Mammary epithelial cell (primary cell): ENCODE measurements at regions of chr9 and their contacts with region 1.

Region 1: GRCh38 chr9:114587385-114588202 is at the start of gene ATP6V1G1:
- DNase-seq: peak; percentile 99
- H3K4me3 ChIP-seq: peak within 1 kb of the TSS; percentile 72 to 94 (median 89)
- H3K27ac ChIP-seq: peak within 1 kb of the TSS; percentile 96
- H3K4me1 ChIP-seq: peaks cover 25% of the 10 kb centered on the region
- H3K27me3 ChIP-seq: no peaks in the 10 kb centered on the region
- CTCF ChIP-seq: peak in 1 of 2 donors; percentile 24
- total RNA-seq, gene ATP6V1G1: 99.6 to 130 TPM

Region 2: DNA sequence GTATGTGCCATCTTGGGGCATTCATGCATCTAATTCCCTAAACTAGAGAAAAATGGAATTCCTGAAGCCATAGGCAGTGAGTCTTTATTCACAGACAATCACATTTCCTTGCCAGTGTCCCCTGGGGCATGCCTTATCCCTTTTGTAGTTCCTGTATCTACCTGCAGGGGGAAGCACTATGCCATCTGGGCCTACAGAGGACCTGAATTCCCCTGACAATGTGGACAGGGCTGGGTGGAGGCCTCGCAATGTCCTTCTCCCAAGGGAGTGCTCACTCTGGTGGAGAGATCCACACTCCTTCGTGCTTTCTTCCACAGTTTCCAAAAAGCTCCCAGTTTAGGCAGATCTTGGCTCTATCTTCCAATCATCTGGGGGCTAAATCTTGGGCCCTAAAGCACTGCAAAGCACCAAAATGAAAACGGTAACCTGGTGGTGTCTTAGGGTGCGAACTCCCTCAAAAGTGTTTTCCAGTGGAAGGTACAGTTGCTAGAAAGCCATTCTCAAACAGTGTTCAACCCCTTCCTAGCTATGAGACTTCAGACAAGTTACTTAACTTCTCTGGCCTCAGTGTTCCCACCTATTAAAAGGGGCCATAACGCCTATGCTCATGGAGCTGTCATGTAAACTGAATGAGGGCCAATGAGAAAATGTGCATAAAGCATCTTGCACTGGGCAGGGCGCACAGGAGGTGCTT is 99.8 kb before region 1 on chr9:
- CTCF ChIA-PET with region 1: no interaction called
- dilution Hi-C with region 1: no loop called
- in situ Hi-C with region 1: no loop called
- intact Hi-C with region 1: loop called (anchors 5 kb)
- DNase-seq: peak; percentile 66
- H3K4me3 ChIP-seq: no peak overlapping the region
- H3K27ac ChIP-seq: no peak overlapping the region
- H3K4me1 ChIP-seq: peaks cover 17% of the 10 kb centered on the region
- H3K27me3 ChIP-seq: no peaks in the 10 kb centered on the region
- CTCF ChIP-seq: peak; percentile 89 to 96

Region 3: GRCh38 chr9:114505187-114506081 is 82.2 kb before region 1 on chr9 and contains the start of gene WHRN:
- CTCF ChIA-PET with region 1: interaction called, 19 read pairs
- dilution Hi-C with region 1: no loop called
- in situ Hi-C with region 1: no loop called
- intact Hi-C with region 1: loop called (anchors 1 kb)
- DNase-seq: peak; percentile 88
- H3K4me3 ChIP-seq: peak within 1 kb of the TSS; percentile 64 to 79 (median 67)
- H3K27ac ChIP-seq: peak within 1 kb of the TSS; percentile 81
- H3K4me1 ChIP-seq: peaks cover 32% of the 10 kb centered on the region
- H3K27me3 ChIP-seq: no peaks in the 10 kb centered on the region
- CTCF ChIP-seq: no peak
- total RNA-seq, gene WHRN: 3.2 to 9.7 TPM

Region 4: GRCh38 chr9:114525505-114525904 is 62.1 kb before region 1 on chr9:
- CTCF ChIA-PET with region 1: interaction called, 4 read pairs
- dilution Hi-C with region 1: loop called (anchors 5 kb)
- in situ Hi-C with region 1: no loop called
- intact Hi-C with region 1: no loop called
- DNase-seq: peak; percentile 62
- H3K4me3 ChIP-seq: no peak overlapping the region
- H3K27ac ChIP-seq: no peak overlapping the region
- H3K4me1 ChIP-seq: no peaks in the 10 kb centered on the region
- H3K27me3 ChIP-seq: peaks cover 4% of the 10 kb centered on the region
- CTCF ChIP-seq: no peak

Region 5: GRCh38 chr9:114551883-114552685 is 35.5 kb before region 1 on chr9:
- CTCF ChIA-PET with region 1: interaction called, 4 read pairs
- dilution Hi-C with region 1: no loop called
- in situ Hi-C with region 1: no loop called
- intact Hi-C with region 1: loop called (anchors 1 kb)
- DNase-seq: peak; percentile 99
- H3K4me3 ChIP-seq: no peak overlapping the region
- H3K27ac ChIP-seq: peak overlapping the region; percentile 96
- H3K4me1 ChIP-seq: peaks cover 22% of the 10 kb centered on the region
- H3K27me3 ChIP-seq: no peaks in the 10 kb centered on the region
- CTCF ChIP-seq: no peak

Region 6: GRCh38 chr9:114574438-114574837 is 13.2 kb before region 1 on chr9:
- CTCF ChIA-PET with region 1: no interaction called
- dilution Hi-C with region 1: no loop called
- in situ Hi-C with region 1: no loop called
- intact Hi-C with region 1: no loop called
- DNase-seq: no peak
- H3K4me3 ChIP-seq: no peak overlapping the region
- H3K27ac ChIP-seq: no peak overlapping the region
- H3K4me1 ChIP-seq: no peaks in the 10 kb centered on the region
- H3K27me3 ChIP-seq: no peaks in the 10 kb centered on the region
- CTCF ChIP-seq: no peak

Region 7: GRCh38 chr9:114621975-114622609 is 34.5 kb after region 1 on chr9:
- CTCF ChIA-PET with region 1: no interaction called
- dilution Hi-C with region 1: loop called (anchors 5 kb)
- in situ Hi-C with region 1: no loop called
- intact Hi-C with region 1: no loop called
- DNase-seq: peak; percentile 60
- H3K4me3 ChIP-seq: no peak overlapping the region
- H3K27ac ChIP-seq: no peak overlapping the region
- H3K4me1 ChIP-seq: peaks cover 9% of the 10 kb centered on the region
- H3K27me3 ChIP-seq: no peaks in the 10 kb centered on the region
- CTCF ChIP-seq: no peak

Region 8: GRCh38 chr9:115575147-115575546 is 987.6 kb after region 1 on chr9:
- CTCF ChIA-PET with region 1: no interaction called
- dilution Hi-C with region 1: no loop called
- in situ Hi-C with region 1: no loop called
- intact Hi-C with region 1: no loop called
- DNase-seq: no peak
- H3K4me3 ChIP-seq: no peak overlapping the region
- H3K27ac ChIP-seq: no peak overlapping the region
- H3K4me1 ChIP-seq: no peaks in the 10 kb centered on the region
- H3K27me3 ChIP-seq: peaks cover 5% of the 10 kb centered on the region
- CTCF ChIP-seq: no peak